A673 (cell line): ENCODE measurements at regions of chr15 and their contacts with region 1.

Region 1: DNA sequence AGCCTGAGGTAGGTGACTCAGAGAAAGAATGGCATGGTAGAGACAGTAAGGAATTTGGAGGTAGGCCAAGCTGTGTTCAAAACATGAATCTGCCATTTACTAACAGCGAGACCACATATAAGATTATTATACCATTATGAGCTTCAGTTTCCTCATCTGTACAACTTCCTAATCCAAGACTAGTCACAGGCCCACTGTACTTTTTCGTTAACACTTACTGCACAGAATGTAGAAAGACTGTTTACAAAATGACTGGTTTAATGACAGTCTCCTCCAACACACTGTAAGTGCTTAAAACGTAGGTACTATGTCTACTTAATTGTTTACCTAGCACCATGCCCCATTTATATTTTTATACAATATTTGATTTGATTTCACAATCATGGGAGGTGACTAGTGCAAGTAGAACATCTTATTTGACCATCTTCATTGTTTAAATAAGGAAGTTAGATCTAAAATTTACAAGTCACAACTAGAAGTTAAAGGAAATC is 25.6 kb downstream of the ATOSA start:
- DNase-seq: no peak
- H3K4me3 ChIP-seq: no peak overlapping the region
- H3K27ac ChIP-seq: peak overlapping the region; percentile 1
- H3K4me1 ChIP-seq: peaks cover 22% of the 10 kb centered on the region
- H3K27me3 ChIP-seq: no peaks in the 10 kb centered on the region
- CTCF ChIP-seq: no peak

Region 2: DNA sequence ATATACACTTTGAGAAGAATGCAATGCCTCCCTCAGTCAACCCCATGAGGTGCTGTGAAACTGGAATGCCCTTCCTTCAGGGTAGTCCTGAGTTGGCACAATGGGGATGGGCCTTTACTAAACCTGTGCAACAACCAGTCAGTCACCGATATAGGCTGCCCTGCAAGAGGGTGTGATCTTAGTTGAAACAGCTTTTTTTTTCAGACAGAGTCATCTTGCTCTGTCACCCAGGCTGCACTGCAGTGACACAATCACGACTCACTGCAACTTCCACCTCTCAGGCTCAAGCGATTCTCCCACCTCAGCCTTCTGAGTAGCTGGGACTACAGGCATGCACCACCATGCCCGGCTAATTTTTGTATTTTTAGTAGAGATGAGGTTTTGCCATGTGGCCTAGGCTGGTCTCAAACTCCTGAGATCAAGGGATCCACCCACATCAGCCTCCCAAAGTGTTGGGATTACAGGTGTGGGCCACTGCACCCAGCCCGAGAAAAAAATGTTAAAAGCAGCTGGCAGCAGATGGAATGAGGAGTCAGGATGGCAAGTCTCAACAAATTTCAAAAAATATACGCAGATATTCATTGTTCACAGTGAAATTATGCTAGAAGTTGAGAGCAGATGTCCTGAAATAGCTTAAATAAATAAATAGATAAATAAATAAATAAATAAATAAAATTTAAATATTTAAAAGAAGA is 156.6 kb before region 1 on chr15:
- CTCF ChIA-PET with region 1: no interaction called
- POLR2A ChIA-PET with region 1: no interaction called
- intact Hi-C with region 1: no loop called
- DNase-seq: no peak
- H3K4me3 ChIP-seq: no peak overlapping the region
- H3K27ac ChIP-seq: no peak overlapping the region
- H3K4me1 ChIP-seq: peaks cover 6% of the 10 kb centered on the region
- H3K27me3 ChIP-seq: no peaks in the 10 kb centered on the region
- CTCF ChIP-seq: no peak

Region 3: DNA sequence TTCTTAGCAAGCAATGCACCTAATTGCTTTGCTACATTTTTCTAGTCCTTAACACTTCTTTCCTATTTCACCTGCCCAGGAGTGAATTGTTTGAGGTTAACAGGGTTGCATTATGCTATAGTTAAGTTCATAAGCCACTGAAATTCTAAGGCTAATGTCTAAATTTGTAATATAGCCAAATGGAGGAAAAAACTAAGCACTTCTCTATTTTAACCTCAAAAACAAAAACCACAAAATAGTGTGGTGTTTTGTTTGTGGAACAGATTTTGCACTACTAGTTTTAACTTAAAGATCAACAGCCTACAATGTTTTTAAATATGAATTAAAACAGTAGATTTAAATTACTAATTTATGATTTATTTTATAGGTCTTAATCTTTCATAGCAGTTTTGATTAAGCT is 20.2 kb after region 1 on chr15:
- CTCF ChIA-PET with region 1: no interaction called
- POLR2A ChIA-PET with region 1: no interaction called
- intact Hi-C with region 1: loop called (anchors 1 kb)
- DNase-seq: no peak
- H3K4me3 ChIP-seq: no peak overlapping the region
- H3K27ac ChIP-seq: no peak overlapping the region
- H3K4me1 ChIP-seq: no peaks in the 10 kb centered on the region
- H3K27me3 ChIP-seq: no peaks in the 10 kb centered on the region
- CTCF ChIP-seq: no peak

Region 4: GRCh38 chr15:52790162-52790708 is 136.7 kb after region 1 on chr15 and contains the start of gene ONECUT1:
- CTCF ChIA-PET with region 1: no interaction called
- POLR2A ChIA-PET with region 1: no interaction called
- intact Hi-C with region 1: no loop called
- DNase-seq: peak; percentile 46
- H3K4me3 ChIP-seq: peak within 1 kb of the TSS; percentile 45
- H3K27ac ChIP-seq: no peak within 1 kb of the TSS
- H3K4me1 ChIP-seq: peaks cover 4% of the 10 kb centered on the region
- H3K27me3 ChIP-seq: peaks cover 98% of the 10 kb centered on the region
- CTCF ChIP-seq: no peak
- total RNA-seq, gene ONECUT1: not detected in 2 replicates